ENCODE measurements at regions of chr2 and their contacts with region 1.

Region 1: GRCh38 chr2:74250189-74250631 is 51.8 kb downstream of the MTHFD2 start:
- DNase-seq: peak in 1 of 2 experiments; percentile 70
- H3K4me3 ChIP-seq: no peak overlapping the region
- H3K27ac ChIP-seq: no peak overlapping the region
- H3K4me1 ChIP-seq: no peaks in the 10 kb centered on the region
- H3K27me3 ChIP-seq: no peaks in the 10 kb centered on the region; a peak in 3 of 7 replicates
- CTCF ChIP-seq: peak; percentile 79 to 84 (median 79)
- EP300 ChIP-seq: no peak
- POLR2A ChIP-seq: no peak
- RAD21 ChIP-seq: peak; percentile 77 to 80

Region 2: DNA sequence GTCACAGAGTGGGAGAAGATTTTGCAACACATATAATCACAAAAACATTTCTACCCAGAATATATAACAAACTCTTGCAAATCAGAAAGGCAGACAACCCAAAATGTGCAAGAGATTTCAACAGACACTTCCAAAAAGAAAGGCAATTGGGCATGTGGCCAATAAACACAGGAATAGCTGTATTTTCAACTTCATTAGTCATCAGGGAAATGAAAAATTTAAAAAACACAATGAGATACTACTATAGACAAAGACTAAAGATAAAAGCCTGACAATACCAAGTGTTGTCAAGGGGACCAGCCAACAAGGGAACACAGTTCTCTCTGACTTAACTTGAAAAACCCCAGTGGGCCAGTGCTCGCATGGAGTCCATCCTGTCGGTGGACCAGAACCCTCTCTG is 11.3 kb before region 1 on chr2:
- CTCF ChIA-PET with region 1: interaction called, 31 read pairs
- POLR2A ChIA-PET with region 1: interaction called, 3 read pairs
- DNase-seq: no peak
- H3K4me3 ChIP-seq: no peak overlapping the region
- H3K27ac ChIP-seq: no peak overlapping the region
- H3K4me1 ChIP-seq: no peaks in the 10 kb centered on the region
- H3K27me3 ChIP-seq: no peaks in the 10 kb centered on the region; a peak in 1 of 7 replicates
- CTCF ChIP-seq: no peak
- EP300 ChIP-seq: no peak
- POLR2A ChIP-seq: no peak
- RAD21 ChIP-seq: no peak

Region 3: DNA sequence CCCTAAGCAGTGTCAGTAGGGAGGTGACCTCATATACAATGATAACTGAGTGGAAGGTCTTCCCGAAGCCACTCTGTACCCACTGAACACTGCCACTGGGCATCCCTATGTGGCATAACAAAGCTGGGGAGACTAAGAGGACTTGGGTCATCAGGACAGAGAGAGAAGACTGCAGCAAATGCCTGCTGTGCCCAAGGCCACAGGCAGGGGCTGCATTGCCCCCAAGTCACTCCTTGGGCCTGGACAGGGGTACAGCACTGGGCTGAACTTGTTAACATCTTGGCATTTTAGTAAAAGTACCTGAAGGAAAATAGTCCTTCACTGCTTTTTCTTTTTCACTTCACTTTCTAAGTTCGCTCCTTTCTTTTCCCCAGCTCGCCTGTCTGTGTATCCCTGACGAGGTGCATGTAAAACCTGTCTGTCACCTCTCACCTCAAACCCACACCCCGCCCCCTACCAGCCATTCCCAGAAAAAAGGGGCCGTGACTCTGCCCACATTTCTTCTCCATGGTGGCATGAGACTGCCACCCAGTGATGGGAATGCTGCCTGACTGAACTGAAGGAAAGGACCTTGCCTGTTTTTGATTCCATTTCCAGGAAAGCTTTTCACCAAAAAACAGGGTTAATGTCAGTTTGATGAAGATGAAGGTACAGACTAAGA is 11.1 kb after region 1 on chr2:
- CTCF ChIA-PET with region 1: interaction called, 50 read pairs
- POLR2A ChIA-PET with region 1: no interaction called
- DNase-seq: peak; percentile 34 to 84
- H3K4me3 ChIP-seq: no peak overlapping the region
- H3K27ac ChIP-seq: no peak overlapping the region
- H3K4me1 ChIP-seq: peaks cover 0 to 4% (median 1%) of the 10 kb centered on the region in 4 experiments; a peak in 2 of 7 replicates
- H3K27me3 ChIP-seq: no peaks in the 10 kb centered on the region
- CTCF ChIP-seq: peak; percentile 61 to 86 (median 64)
- EP300 ChIP-seq: no peak
- POLR2A ChIP-seq: no peak
- RAD21 ChIP-seq: peak; percentile 88 to 90

Region 4: GRCh38 chr2:74267068-74267467 is 16.9 kb after region 1 on chr2:
- CTCF ChIA-PET with region 1: interaction called, 50 read pairs
- POLR2A ChIA-PET with region 1: no interaction called
- DNase-seq: no peak
- H3K4me3 ChIP-seq: no peak overlapping the region
- H3K27ac ChIP-seq: no peak overlapping the region
- H3K4me1 ChIP-seq: no peaks in the 10 kb centered on the region
- H3K27me3 ChIP-seq: no peaks in the 10 kb centered on the region
- CTCF ChIP-seq: peak; percentile 38 to 62 (median 57); a peak in 3 of 4 replicates
- EP300 ChIP-seq: no peak
- POLR2A ChIP-seq: no peak
- RAD21 ChIP-seq: peak; percentile 59 to 60

Region 5: DNA sequence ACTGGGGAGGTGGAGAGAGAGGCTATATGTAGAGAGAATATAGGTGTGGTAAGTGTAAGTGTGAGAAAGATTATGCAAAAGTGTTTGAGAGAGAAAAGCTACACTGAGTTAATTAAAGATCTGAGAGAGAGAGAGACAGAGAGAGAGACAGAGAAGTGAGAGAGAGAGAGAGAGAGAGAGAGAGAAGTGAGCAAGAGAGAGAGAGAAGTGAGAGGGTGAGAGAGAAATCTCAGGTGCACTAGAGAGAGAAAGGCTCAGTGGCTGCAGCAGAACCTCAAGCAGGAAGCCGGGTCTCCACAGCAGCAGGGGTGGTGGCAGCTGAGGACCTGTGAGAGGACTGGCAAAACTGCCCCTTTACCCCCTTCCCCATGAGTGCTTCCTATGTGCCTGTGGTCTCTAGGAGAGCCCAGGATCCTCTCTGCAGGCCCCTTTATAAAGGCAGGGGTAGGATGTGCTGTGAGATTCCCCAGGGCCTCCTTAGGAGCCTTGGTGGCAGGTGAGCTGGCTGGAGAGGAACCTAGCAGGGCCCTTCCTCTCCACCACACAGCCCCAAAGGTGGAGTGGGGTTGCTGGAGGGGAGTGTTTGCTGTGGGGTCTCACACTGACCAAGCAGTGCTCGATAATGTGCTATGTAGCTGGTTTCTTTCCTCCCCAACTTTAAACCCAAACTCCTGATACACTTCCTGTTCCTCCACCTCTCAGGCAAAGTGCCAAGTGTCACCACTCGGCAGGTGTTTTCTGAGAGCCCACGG is 40.4 kb after region 1 on chr2:
- CTCF ChIA-PET with region 1: interaction called, 10 read pairs
- POLR2A ChIA-PET with region 1: no interaction called
- DNase-seq: no peak
- H3K4me3 ChIP-seq: no peak overlapping the region
- H3K27ac ChIP-seq: no peak overlapping the region
- H3K4me1 ChIP-seq: no peaks in the 10 kb centered on the region
- H3K27me3 ChIP-seq: no peaks in the 10 kb centered on the region
- CTCF ChIP-seq: no peak
- EP300 ChIP-seq: no peak
- POLR2A ChIP-seq: no peak
- RAD21 ChIP-seq: no peak

Measured in H1 (cell line).